ENCODE measurements at regions of chr6 and their contacts with region 1.

Region 1: GRCh38 chr6:143026696-143027449 is 33.8 kb upstream of the AIG1 start:
- DNase-seq: peak; percentile 22 to 47 (median 32)
- H3K4me3 ChIP-seq: no peak overlapping the region
- H3K4me3 Mint-ChIP-seq: no peak overlapping the region
- H3K27ac ChIP-seq: no peak overlapping the region
- H3K27ac Mint-ChIP-seq: no peak overlapping the region
- H3K4me1 ChIP-seq: no peaks in the 10 kb centered on the region
- H3K4me1 Mint-ChIP-seq: no peaks in the 10 kb centered on the region
- H3K27me3 ChIP-seq: no peaks in the 10 kb centered on the region
- H3K27me3 Mint-ChIP-seq: no peaks in the 10 kb centered on the region
- CTCF ChIP-seq: peak; percentile 81

Region 2: GRCh38 chr6:142566628-142567396 is 460.1 kb before region 1 on chr6:
- intact Hi-C with region 1: loop called in 1 of 2 experiments (anchors 10 kb)
- DNase-seq: peak; percentile 10 to 37 (median 32)
- H3K4me3 ChIP-seq: no peak overlapping the region
- H3K4me3 Mint-ChIP-seq: no peak overlapping the region
- H3K27ac ChIP-seq: no peak overlapping the region
- H3K27ac Mint-ChIP-seq: peak overlapping the region in 1 of 7 donors; percentile 65
- H3K4me1 ChIP-seq: no peaks in the 10 kb centered on the region
- H3K4me1 Mint-ChIP-seq: no peaks in the 10 kb centered on the region
- H3K27me3 ChIP-seq: no peaks in the 10 kb centered on the region
- H3K27me3 Mint-ChIP-seq: peaks cover 2 to 4% (median 3%) of the 10 kb centered on the region in 3 donors
- CTCF ChIP-seq: peak; percentile 89

Region 3: DNA sequence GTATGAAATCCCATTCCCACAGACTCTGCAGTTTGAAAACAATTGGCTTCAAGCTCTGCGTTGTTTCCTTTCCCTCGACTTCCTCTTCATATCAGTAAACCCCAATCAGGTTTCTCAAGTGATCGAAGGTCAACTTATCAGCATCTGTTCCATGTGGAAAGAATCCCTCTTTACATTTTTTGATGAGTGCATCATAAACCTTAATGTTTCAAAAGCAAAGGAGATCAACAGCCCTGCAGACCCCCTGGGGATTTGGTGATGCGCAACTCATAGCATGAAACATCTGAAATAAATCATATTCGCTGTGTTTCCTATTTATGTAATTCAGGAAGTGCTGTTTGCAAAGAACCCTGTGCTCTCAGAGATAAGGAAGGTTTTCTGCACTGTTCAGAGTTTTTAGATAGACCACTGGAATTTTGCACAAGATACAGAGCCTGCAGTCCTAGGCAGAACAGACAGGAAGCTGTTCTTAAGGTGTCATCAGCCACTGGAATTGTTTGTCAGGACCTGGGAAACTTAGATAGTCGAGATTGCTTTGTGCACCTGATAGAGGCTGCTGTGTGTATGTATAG is 297.9 kb before region 1 on chr6:
- intact Hi-C with region 1: no loop called
- DNase-seq: peak in 2 of 3 donors; percentile 6 to 22
- H3K4me3 ChIP-seq: peak overlapping the region in 2 of 3 experiments; percentile 41 to 63
- H3K4me3 Mint-ChIP-seq: peak overlapping the region; percentile 73 to 83
- H3K27ac ChIP-seq: no peak overlapping the region
- H3K27ac Mint-ChIP-seq: peak overlapping the region in 3 of 7 donors; percentile 41 to 51 (median 45)
- H3K4me1 ChIP-seq: peaks cover 23 to 28% of the 10 kb centered on the region in 2 donors
- H3K4me1 Mint-ChIP-seq: peaks cover 25% of the 10 kb centered on the region
- H3K27me3 ChIP-seq: no peaks in the 10 kb centered on the region
- H3K27me3 Mint-ChIP-seq: peaks cover 0 to 2% (median 0%) of the 10 kb centered on the region in 3 donors
- CTCF ChIP-seq: no peak